Activated T-helper 1 cell treated with anti-CD3 and anti-CD28 coated beads, Interleukin-12 subunit alpha, Interleukin-12 subunit beta, Interleukin-2, Interleukin-4 antibody, amounts not matched to agents 30 ng/mL and 10 ng/mL and 1 ng/mL, durations not matched to agents 14 hours and 24 hours and 36 hours (primary cell): ENCODE measurements at regions of chr11 and their contacts with region 1.

Region 1: GRCh38 chr11:125568970-125569914 is at the start of gene EI24:
- DNase-seq: peak; percentile 88
- H3K4me3 Mint-ChIP-seq: peak within 1 kb of the TSS; percentile 95
- H3K27ac Mint-ChIP-seq: peak within 1 kb of the TSS; percentile 94
- H3K4me1 Mint-ChIP-seq: peaks cover 23% of the 10 kb centered on the region
- H3K27me3 Mint-ChIP-seq: no peaks in the 10 kb centered on the region
- total RNA-seq, gene EI24: 61.6 and 62.4 TPM in 2 replicates

Region 2: DNA sequence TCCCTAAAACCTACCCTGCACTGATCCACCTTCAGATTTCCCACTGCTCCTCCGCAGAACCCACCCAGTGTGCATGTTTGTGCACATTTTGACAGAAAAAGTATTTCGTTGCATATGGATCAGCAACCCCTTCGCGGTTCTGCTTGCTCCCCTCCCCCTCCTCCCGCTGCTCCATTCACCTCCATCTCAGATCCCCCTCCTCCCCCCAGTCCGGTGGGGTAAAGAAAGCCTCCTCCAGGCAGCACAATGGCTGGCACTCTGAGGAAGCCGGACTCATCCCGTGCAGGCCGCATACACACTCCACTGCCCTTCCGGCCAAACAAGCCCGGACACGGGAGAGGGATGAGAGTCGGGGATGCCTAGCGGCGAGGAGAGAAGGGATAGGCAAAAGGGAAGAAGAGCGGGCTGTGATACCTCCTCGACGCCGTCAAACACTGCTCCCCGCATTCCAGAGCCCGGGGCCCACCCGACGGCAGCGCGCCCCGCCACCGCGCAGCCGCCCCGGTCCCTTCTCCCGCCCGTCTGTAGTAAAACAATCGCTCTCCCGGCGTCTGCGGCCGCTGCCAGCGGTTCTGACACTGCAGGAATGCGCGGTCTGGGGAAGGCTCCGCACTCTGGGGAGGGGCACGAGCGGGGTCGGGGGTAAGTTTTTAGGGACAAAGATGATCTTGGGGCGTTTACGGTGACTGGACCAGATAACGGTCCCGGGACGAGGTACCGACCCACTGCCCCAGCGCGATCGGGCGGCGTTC is 74.1 kb before region 1 on chr11:
- intact Hi-C with region 1: loop called (anchors 5 kb)
- DNase-seq: no peak
- H3K4me3 Mint-ChIP-seq: peak overlapping the region; percentile 90
- H3K27ac Mint-ChIP-seq: peak overlapping the region; percentile 19
- H3K4me1 Mint-ChIP-seq: peaks cover 31% of the 10 kb centered on the region
- H3K27me3 Mint-ChIP-seq: peaks cover 55% of the 10 kb centered on the region

Region 3: GRCh38 chr11:125514336-125515101 is 54.7 kb before region 1 on chr11:
- intact Hi-C with region 1: loop called (anchors 1 kb)
- DNase-seq: peak; percentile 55
- H3K4me3 Mint-ChIP-seq: peak overlapping the region; percentile 8
- H3K27ac Mint-ChIP-seq: peak overlapping the region; percentile 83
- H3K4me1 Mint-ChIP-seq: peaks cover 57% of the 10 kb centered on the region
- H3K27me3 Mint-ChIP-seq: no peaks in the 10 kb centered on the region

Region 4: DNA sequence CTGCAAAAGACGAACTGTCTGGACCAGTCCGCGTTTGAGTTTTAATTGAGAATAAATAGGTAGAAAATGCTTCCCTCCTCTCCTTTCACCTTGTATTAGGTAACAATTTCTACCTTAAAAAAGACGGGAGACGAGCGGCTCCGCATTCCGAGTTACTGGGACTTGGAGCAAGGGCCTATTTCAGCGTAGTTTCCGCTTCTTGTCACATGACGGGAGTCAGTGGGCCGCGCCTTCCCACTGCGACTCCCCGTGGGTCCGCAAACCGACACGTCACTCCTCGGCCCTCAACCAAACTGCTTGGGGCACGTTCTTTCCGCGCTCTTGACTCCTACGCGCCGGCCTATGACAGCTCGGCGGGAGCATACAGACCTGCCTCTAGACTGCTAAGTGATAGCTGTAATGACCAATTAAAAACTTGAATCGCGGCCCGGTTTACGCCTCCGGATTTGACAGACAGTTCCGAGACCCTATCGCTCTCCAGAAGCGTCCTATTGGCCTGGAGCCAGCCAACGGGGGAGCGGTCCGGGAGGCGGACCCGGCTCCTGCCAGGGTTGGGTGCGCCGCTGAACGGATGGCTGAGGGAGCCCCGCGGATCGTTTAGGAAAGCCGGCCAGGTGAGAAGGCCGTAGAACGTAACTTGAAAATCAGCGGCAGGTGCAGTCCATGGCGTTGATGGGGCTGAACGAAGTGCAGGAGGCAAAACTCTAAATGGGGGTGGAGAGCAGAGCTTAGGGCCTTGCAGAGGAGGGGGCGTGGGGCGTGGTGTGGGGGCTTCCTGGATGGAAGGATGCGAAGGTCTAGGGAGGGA is 23.3 kb after region 1 on chr11 and contains the start of gene STT3A:
- intact Hi-C with region 1: loop called (anchors 1 kb)
- DNase-seq: peak; percentile 98
- H3K4me3 Mint-ChIP-seq: peak within 1 kb of the TSS; percentile 98
- H3K27ac Mint-ChIP-seq: peak within 1 kb of the TSS; percentile 94
- H3K4me1 Mint-ChIP-seq: peaks cover 50% of the 10 kb centered on the region
- H3K27me3 Mint-ChIP-seq: no peaks in the 10 kb centered on the region
- total RNA-seq, gene STT3A: 164 and 171 TPM in 2 replicates

Region 5: GRCh38 chr11:125874556-125875124 is 305.4 kb after region 1 on chr11:
- intact Hi-C with region 1: loop called (anchors 5 kb)
- DNase-seq: no peak
- H3K4me3 Mint-ChIP-seq: no peak overlapping the region
- H3K27ac Mint-ChIP-seq: no peak overlapping the region
- H3K4me1 Mint-ChIP-seq: no peaks in the 10 kb centered on the region
- H3K27me3 Mint-ChIP-seq: peaks cover 9% of the 10 kb centered on the region

Region 6: DNA sequence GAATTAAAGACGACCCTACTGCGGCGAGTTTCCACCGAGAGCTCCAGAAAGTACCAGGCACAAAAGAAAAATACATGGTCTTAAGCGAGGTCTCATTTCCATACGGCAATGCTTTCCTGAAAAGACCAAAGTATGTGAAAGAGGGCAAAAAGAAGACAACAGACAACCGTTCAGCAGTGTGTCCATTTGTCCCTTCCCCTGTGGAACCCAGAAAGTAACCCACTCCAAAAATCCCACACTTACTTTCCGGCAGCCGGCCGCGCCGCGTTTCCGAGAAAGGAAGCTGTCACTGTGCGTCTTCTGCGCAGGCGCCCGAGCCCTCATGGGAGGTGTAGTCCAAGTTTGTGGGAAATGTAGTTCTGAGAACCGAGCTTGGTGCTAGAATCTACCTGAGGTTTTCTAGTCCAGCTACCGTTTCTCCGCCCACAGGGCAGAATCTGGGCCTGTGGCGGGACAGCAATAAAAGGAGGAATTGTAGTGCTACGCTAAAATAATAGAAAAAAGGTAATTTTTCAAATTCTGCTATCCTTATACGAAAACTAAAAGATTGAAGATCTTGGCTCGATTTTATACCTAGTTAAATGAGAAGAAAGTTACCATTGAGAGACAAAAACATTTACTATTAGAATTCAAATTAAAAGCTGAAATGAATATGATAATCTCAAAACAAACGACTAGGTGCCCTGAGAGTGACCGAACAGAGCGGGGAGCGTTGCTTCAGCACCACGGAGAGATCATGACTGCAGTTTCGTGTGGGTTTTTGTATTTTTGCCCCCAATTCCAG is 333.9 kb after region 1 on chr11 and contains the start of gene PUS3:
- intact Hi-C with region 1: loop called (anchors 2 kb)
- DNase-seq: peak; percentile 85
- H3K4me3 Mint-ChIP-seq: peak within 1 kb of the TSS; percentile 98
- H3K27ac Mint-ChIP-seq: peak within 1 kb of the TSS; percentile 88
- H3K4me1 Mint-ChIP-seq: peaks cover 28% of the 10 kb centered on the region
- H3K27me3 Mint-ChIP-seq: peaks cover 34% of the 10 kb centered on the region
- total RNA-seq, gene PUS3: 16.5 and 23.6 TPM in 2 replicates